Panc1 (cell line): ENCODE measurements at regions of chr12 and their contacts with region 1.

Region 1: DNA sequence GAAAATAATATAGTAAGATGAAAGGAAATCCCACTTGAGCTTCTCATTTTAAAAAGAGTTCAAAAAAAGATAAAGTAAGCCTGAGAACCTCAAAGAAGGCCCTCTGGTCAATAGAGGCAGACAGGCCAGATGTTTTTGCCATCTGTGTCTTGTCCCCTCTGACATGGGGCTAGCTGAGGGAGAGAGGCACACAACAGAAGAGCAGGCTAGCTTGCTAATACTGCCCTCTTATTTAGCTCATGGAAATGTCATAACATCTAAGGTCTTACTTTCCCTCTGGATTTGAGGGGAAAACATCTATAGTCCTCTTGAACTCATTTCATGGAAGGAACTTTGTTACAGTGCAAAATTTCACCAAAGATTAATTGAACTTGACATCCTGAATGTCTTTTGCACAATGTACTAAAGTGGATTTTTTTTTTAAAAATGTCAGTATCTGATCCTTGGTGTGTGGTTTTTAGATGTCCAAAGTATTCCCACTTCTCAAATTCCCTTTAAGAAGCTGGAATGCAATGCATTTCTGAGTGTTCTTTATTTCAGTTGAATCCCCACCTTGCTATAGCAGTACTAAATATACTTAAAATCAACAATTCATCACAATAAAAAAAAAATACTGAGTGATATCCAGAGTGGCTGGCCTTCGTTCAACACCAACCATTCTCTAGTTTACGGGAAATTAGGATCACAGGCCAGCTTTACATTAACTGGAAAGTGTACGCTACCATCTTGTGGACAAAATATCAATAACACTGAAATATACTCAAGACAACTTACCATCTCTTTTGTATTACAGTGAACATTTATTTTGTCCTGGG is 176.7 kb downstream of the PAH start:
- DNase-seq: no peak
- ATAC-seq: no peak
- H3K4me3 ChIP-seq: no peak overlapping the region
- H3K27ac ChIP-seq: no peak overlapping the region
- H3K4me1 ChIP-seq: no peaks in the 10 kb centered on the region
- H3K27me3 ChIP-seq: no peaks in the 10 kb centered on the region
- CTCF ChIP-seq: peak; percentile 13; the same call in 1 of the 2 replicates

Region 2: GRCh38 chr12:102043928-102044327 is 696.4 kb before region 1 on chr12:
- CTCF ChIA-PET with region 1: interaction called, 20 read pairs
- POLR2A ChIA-PET with region 1: no interaction called
- in situ Hi-C with region 1: no loop called
- intact Hi-C with region 1: no loop called
- DNase-seq: no peak
- ATAC-seq: no peak
- H3K4me3 ChIP-seq: no peak overlapping the region
- H3K27ac ChIP-seq: no peak overlapping the region
- H3K4me1 ChIP-seq: no peaks in the 10 kb centered on the region
- H3K27me3 ChIP-seq: no peaks in the 10 kb centered on the region
- CTCF ChIP-seq: no peak

Region 3: DNA sequence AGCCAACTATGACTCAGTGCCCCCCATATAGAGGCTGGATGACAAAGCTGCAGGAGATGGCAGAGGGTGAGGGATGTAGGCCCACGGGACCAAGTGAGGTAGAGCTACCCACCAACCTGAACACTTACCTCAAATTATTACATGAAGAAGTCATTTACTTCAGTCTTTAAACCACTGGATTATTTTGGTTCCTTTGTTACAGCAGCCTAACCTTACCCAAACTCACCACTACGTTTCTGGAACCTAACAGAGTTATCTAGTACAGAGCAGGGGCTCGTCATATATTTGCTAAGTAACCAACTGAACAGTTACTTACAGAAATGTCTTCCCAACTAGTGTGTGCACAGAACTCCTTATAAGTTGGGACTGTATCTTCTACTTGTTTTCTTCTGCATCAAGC is 174.8 kb before region 1 on chr12:
- CTCF ChIA-PET with region 1: interaction called, 14 read pairs
- POLR2A ChIA-PET with region 1: no interaction called
- in situ Hi-C with region 1: no loop called
- intact Hi-C with region 1: no loop called
- DNase-seq: no peak
- ATAC-seq: no peak
- H3K4me3 ChIP-seq: no peak overlapping the region
- H3K27ac ChIP-seq: no peak overlapping the region
- H3K4me1 ChIP-seq: no peaks in the 10 kb centered on the region
- H3K27me3 ChIP-seq: no peaks in the 10 kb centered on the region
- CTCF ChIP-seq: no peak